B cell (primary cell): ENCODE measurements at regions of chr10 and their contacts with region 1.

Region 1: GRCh38 chr10:15097011-15097812 is at the start of gene RPP38:
- DNase-seq: peak; percentile 98
- ATAC-seq: peak; percentile 75
- H3K4me3 ChIP-seq: peak within 1 kb of the TSS; percentile 80 to 91 (median 87)
- H3K4me3 Mint-ChIP-seq: peak within 1 kb of the TSS; percentile 93
- H3K27ac ChIP-seq: peak within 1 kb of the TSS; percentile 92 to 96
- H3K27ac Mint-ChIP-seq: peak within 1 kb of the TSS; percentile 94
- H3K4me1 ChIP-seq: peaks cover 23 to 27% of the 10 kb centered on the region in 2 donors
- H3K4me1 Mint-ChIP-seq: peaks cover 26% of the 10 kb centered on the region
- H3K27me3 ChIP-seq: no peaks in the 10 kb centered on the region
- H3K27me3 Mint-ChIP-seq: no peaks in the 10 kb centered on the region
- CTCF ChIP-seq: no peak
- total RNA-seq, gene RPP38: 24.5 and 24.8 TPM in 2 replicates

Region 2: GRCh38 chr10:14878266-14879054 is 218.8 kb before region 1 on chr10 and contains the start of gene SUV39H2:
- CTCF ChIA-PET with region 1: no interaction called
- POLR2A ChIA-PET with region 1: no interaction called
- intact Hi-C with region 1: loop called (anchors 1 kb)
- DNase-seq: peak; percentile 96
- ATAC-seq: peak; percentile 92
- H3K4me3 ChIP-seq: peak within 1 kb of the TSS; percentile 53 to 98 (median 94)
- H3K4me3 Mint-ChIP-seq: peak within 1 kb of the TSS; percentile 96
- H3K27ac ChIP-seq: peak within 1 kb of the TSS; percentile 64 to 80
- H3K27ac Mint-ChIP-seq: peak within 1 kb of the TSS; percentile 87
- H3K4me1 ChIP-seq: peaks cover 17 to 23% of the 10 kb centered on the region in 2 donors
- H3K4me1 Mint-ChIP-seq: peaks cover 28% of the 10 kb centered on the region
- H3K27me3 ChIP-seq: peaks cover 0 to 6% (median 0%) of the 10 kb centered on the region in 4 experiments
- H3K27me3 Mint-ChIP-seq: no peaks in the 10 kb centered on the region
- CTCF ChIP-seq: no peak
- total RNA-seq, gene SUV39H2: 3.2 and 3.5 TPM in 2 replicates